HepG2 (cell line): ENCODE measurements at regions of chr17 and their contacts with region 1.

Region 1: DNA sequence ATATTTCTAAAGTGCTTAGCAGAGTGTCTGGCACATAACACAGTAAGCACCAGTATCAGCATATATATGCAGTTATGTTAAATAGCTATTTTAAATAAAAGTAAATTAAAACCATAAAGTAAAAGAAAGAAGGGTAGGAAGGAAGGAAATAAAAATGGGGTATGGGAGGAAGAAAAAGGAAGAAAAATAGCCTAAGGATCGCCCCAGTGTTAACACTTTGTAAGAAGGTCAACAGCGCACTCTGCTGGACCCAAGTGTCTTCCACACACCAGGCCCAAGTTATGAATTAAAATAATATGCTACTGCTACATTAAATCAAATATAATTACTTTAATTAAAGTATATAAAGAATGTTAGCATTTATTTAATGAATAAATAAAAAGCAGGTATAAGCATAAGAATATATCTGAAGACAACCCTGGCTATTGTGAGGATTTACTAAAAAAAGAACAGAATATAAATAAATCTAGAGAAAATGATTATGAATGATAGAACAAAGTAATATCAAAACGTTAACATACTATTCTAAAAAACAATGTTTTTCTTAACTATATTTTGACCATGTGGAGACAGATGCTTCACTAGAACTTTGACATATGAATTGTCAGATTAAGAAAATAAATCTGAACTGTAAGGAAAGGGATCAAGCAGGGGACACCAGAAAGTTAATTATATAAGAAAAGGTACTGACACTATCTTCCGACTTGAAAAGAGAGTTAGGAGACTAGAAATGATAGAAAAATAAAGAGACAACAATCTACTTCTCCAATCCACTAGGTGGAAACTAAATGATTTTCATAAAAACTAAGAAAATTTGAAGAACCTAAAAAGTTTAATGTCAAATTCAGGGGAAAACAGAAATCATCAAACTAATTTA is 25.9 kb downstream of the BRIP1 start:
- DNase-seq: peak; percentile 54
- ATAC-seq: peak; percentile 71
- H3K4me3 ChIP-seq: no peak overlapping the region
- H3K27ac ChIP-seq: no peak overlapping the region
- H3K4me1 ChIP-seq: no peaks in the 10 kb centered on the region
- H3K27me3 ChIP-seq: no peaks in the 10 kb centered on the region
- CTCF ChIP-seq: peak; percentile 73
- EP300 ChIP-seq: no peak
- POLR2A ChIP-seq: no peak
- RAD21 ChIP-seq: peak; percentile 66; the same call in 1 of the 2 replicates

Region 2: GRCh38 chr17:61002316-61002736 is 835.1 kb before region 1 on chr17:
- CTCF ChIA-PET with region 1: no interaction called
- POLR2A ChIA-PET with region 1: no interaction called
- in situ Hi-C with region 1: loop called (anchors 25 kb)
- intact Hi-C with region 1: no loop called
- DNase-seq: peak; percentile 41
- ATAC-seq: no peak
- H3K4me3 ChIP-seq: no peak overlapping the region
- H3K27ac ChIP-seq: no peak overlapping the region
- H3K4me1 ChIP-seq: no peaks in the 10 kb centered on the region
- H3K27me3 ChIP-seq: no peaks in the 10 kb centered on the region
- CTCF ChIP-seq: peak; percentile 69
- EP300 ChIP-seq: no peak
- POLR2A ChIP-seq: no peak
- RAD21 ChIP-seq: peak; percentile 48; the same call in 1 of the 2 replicates

Region 3: GRCh38 chr17:61635913-61636432 is 201.4 kb before region 1 on chr17:
- CTCF ChIA-PET with region 1: interaction called, 73 read pairs
- POLR2A ChIA-PET with region 1: no interaction called
- in situ Hi-C with region 1: loop called (anchors 5 kb)
- intact Hi-C with region 1: loop called (anchors 1 kb)
- DNase-seq: peak; percentile 62
- ATAC-seq: peak; percentile 58
- H3K4me3 ChIP-seq: no peak overlapping the region
- H3K27ac ChIP-seq: no peak overlapping the region
- H3K4me1 ChIP-seq: no peaks in the 10 kb centered on the region
- H3K27me3 ChIP-seq: no peaks in the 10 kb centered on the region
- CTCF ChIP-seq: peak; percentile 91
- EP300 ChIP-seq: no peak
- POLR2A ChIP-seq: no peak
- RAD21 ChIP-seq: peak; percentile 83